ENCODE measurements at regions of chr6 and their contacts with region 1.

Region 1: GRCh38 chr6:10954590-10955010 is 67.7 kb downstream of the SYCP2L start:
- DNase-seq: peak; percentile 52 to 80
- ATAC-seq: peak; percentile 89

Region 2: GRCh38 chr6:11064836-11065235 is 110.2 kb after region 1 on chr6:
- intact Hi-C with region 1: loop called in 1 of 2 experiments (anchors 5 kb)
- DNase-seq: no peak
- ATAC-seq: no peak

Region 3: GRCh38 chr6:11179419-11180202 is 225.0 kb after region 1 on chr6:
- intact Hi-C with region 1: no loop called
- DNase-seq: no peak
- ATAC-seq: no peak

Region 4: GRCh38 chr6:11537229-11538051 is 582.8 kb after region 1 on chr6 and contains the start of gene TMEM170B:
- intact Hi-C with region 1: no loop called
- DNase-seq: peak; percentile 93
- ATAC-seq: peak; percentile 94
- total RNA-seq, gene TMEM170B: 1.6 to 2.5 TPM